ENCODE measurements at regions of chr3 and their contacts with region 1.

Region 1: GRCh38 chr3:17412950-17413530 is 329.4 kb downstream of the TBC1D5 start:
- DNase-seq: no peak
- ATAC-seq: peak; percentile 61 to 82 (median 65)
- H3K4me3 ChIP-seq: no peak overlapping the region
- H3K27ac ChIP-seq: no peak overlapping the region
- H3K4me1 ChIP-seq: peaks cover 5% of the 10 kb centered on the region
- H3K27me3 ChIP-seq: no peaks in the 10 kb centered on the region
- CTCF ChIP-seq: peak; percentile 77

Region 2: GRCh38 chr3:17258823-17259436 is 154.1 kb before region 1 on chr3:
- intact Hi-C with region 1: loop called (anchors 2 to 5 kb)
- DNase-seq: no peak
- ATAC-seq: no peak
- H3K4me3 ChIP-seq: no peak overlapping the region
- H3K27ac ChIP-seq: no peak overlapping the region
- H3K4me1 ChIP-seq: no peaks in the 10 kb centered on the region
- H3K27me3 ChIP-seq: no peaks in the 10 kb centered on the region
- CTCF ChIP-seq: peak; percentile 79